GM10248 (cell line): ENCODE measurements at regions of chr5 and their contacts with region 1.

Region 1: GRCh38 chr5:31898036-31898632 is 259.2 kb downstream of the PDZD2 start:
- DNase-seq: no peak
- CTCF ChIP-seq: no peak

Region 2: GRCh38 chr5:31908396-31908795 is 10.3 kb after region 1 on chr5:
- CTCF ChIA-PET with region 1: interaction called, 12 read pairs
- POLR2A ChIA-PET with region 1: no interaction called
- DNase-seq: no peak
- CTCF ChIP-seq: no peak

Region 3: DNA sequence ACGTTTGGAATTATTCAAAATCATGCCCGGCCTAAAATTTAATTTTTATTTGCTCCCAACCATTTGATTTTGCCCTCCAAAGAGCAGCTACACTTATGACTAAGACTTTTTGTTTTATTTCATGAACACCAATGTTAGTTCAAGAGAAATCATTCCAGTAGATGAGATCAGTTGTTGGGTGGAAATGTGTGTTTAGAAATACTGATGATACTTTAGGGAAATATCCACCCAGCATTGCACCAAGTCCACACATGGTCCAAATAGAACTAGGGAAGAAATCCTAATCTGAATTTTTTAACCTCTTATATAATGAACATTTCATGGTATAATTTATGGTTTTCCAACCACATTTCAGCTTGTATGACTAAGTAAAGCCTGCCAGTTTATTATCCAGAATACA is 304.3 kb after region 1 on chr5:
- CTCF ChIA-PET with region 1: no interaction called
- POLR2A ChIA-PET with region 1: no interaction called
- DNase-seq: no peak
- CTCF ChIP-seq: no peak

Region 4: DNA sequence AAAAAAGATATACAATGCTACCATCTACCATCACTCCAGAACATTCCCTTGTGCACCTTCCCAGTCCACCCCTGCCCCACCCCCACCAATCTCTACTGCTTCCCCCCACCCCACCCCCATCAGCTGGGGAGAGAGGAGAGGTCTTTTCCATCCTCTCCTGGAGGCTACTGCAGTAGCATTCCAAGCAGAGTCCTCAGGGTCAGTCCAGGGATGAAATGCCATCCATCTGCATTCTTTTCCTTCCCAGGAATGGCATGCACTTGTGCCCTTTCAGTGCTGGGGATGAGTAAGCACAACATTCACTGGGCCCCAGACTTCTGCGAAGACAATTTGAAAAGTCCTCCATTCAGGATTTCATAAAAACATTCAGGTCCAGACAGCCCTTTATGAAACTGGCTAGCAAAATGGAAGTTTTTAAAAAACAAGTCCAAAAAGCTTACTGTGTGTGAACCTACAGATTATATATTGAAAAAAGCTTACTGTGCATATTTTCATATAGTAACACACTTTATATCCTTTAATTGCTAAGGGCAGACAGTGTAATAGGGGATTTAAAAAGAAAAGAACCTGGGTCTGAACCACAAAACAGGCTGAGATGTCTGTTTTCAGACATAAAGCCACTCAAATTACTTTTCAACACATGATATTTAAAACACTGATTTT is 325.9 kb after region 1 on chr5:
- CTCF ChIA-PET with region 1: no interaction called
- POLR2A ChIA-PET with region 1: no interaction called
- DNase-seq: no peak
- CTCF ChIP-seq: no peak